ENCODE measurements at regions of chr11 and their contacts with region 1.

Region 1: DNA sequence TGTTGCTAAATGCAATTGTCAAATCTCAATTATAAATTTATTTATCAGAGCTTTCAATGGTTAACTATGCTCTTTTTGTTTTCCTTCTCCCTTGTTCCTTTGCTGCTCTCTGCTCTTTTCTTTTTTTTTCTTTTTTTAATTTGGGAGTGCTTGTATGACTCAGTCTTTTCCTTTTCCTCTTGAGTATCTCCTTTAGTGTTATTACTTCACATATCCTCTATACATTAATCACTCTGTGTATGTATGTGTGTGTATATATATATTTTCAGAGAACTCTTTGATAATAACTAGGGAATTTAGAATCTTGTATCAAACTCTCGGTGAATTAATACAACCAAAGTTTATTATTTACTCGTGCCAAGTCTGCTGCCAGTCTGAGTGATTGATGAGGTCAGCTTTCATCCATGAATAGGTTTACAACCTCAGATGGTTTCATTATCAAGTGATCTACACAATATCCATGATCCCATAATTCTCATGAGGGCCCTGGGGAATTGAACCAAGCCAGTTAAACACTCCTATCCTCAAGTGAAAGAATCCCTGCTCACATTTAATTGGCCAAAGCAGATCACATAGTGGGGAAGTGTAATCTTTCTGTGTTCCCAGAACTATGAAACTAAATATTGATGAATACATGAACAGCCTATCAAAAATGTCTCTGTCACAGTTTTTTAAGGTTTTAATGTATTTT is 743.4 kb upstream of the CNTN5 start:
- DNase-seq: no peak
- ATAC-seq: no peak
- H3K4me3 ChIP-seq: no peak overlapping the region
- H3K4me3 Mint-ChIP-seq: no peak overlapping the region
- H3K27ac ChIP-seq: no peak overlapping the region
- H3K27ac Mint-ChIP-seq: no peak overlapping the region
- H3K4me1 ChIP-seq: no peaks in the 10 kb centered on the region
- H3K4me1 Mint-ChIP-seq: peaks cover 0 to 2% (median 0%) of the 10 kb centered on the region in 7 donors
- H3K27me3 ChIP-seq: no peaks in the 10 kb centered on the region
- H3K27me3 Mint-ChIP-seq: no peaks in the 10 kb centered on the region

Region 2: DNA sequence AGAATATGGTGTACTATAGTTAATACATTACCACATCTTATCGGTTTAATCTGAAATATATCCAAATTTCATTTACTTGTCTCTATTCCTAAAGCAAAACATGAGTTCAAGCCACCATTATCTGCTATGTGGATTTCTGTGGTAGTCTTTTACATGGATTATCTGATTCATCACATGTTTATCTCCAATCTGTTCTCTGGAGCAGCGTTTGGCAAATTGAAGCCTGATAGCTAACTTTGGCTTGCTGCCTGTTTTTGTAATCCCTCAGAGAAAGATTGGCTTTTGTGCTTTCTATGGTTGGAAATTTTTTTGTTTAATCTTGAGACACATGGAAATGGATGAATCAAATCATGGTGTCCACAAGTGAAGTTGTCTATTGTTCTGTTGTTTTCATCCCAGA is 1613.3 kb before region 1 on chr11:
- CTCF ChIA-PET with region 1: no interaction called
- POLR2A ChIA-PET with region 1: no interaction called
- intact Hi-C with region 1: loop called in 1 of 2 experiments (anchors 5 kb)
- DNase-seq: no peak
- ATAC-seq: no peak
- H3K4me3 ChIP-seq: no peak overlapping the region
- H3K4me3 Mint-ChIP-seq: no peak overlapping the region
- H3K27ac ChIP-seq: no peak overlapping the region
- H3K27ac Mint-ChIP-seq: no peak overlapping the region
- H3K4me1 ChIP-seq: no peaks in the 10 kb centered on the region
- H3K4me1 Mint-ChIP-seq: no peaks in the 10 kb centered on the region
- H3K27me3 ChIP-seq: no peaks in the 10 kb centered on the region
- H3K27me3 Mint-ChIP-seq: no peaks in the 10 kb centered on the region

Region 3: DNA sequence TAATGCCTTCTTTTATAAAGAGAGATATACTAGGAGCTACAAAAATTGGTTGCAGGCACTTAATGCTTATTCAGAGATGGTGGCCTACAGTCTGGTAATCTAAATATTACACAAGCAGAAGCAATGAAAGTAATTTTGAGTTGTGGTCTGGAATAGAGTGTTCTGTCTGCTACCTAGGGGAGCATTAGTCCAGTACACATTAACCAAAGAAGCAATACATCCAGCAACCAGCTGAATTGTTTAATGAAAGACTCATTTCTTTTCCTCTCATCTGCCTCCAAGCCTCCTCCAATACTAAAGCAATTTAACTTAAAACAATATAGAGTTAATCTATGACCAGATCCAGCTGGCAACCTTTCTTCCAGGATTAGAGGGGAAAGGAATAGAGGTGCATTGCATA is 133.7 kb before region 1 on chr11:
- CTCF ChIA-PET with region 1: no interaction called
- POLR2A ChIA-PET with region 1: no interaction called
- intact Hi-C with region 1: no loop called
- DNase-seq: no peak
- ATAC-seq: no peak
- H3K4me3 ChIP-seq: no peak overlapping the region
- H3K4me3 Mint-ChIP-seq: no peak overlapping the region
- H3K27ac ChIP-seq: no peak overlapping the region
- H3K27ac Mint-ChIP-seq: no peak overlapping the region
- H3K4me1 ChIP-seq: no peaks in the 10 kb centered on the region
- H3K4me1 Mint-ChIP-seq: no peaks in the 10 kb centered on the region
- H3K27me3 ChIP-seq: no peaks in the 10 kb centered on the region
- H3K27me3 Mint-ChIP-seq: no peaks in the 10 kb centered on the region

Region 4: GRCh38 chr11:98243897-98244296 is 33.5 kb before region 1 on chr11:
- CTCF ChIA-PET with region 1: no interaction called
- POLR2A ChIA-PET with region 1: no interaction called
- intact Hi-C with region 1: no loop called
- DNase-seq: no peak
- ATAC-seq: no peak
- H3K4me3 ChIP-seq: no peak overlapping the region
- H3K4me3 Mint-ChIP-seq: no peak overlapping the region
- H3K27ac ChIP-seq: no peak overlapping the region
- H3K27ac Mint-ChIP-seq: no peak overlapping the region
- H3K4me1 ChIP-seq: no peaks in the 10 kb centered on the region
- H3K4me1 Mint-ChIP-seq: no peaks in the 10 kb centered on the region
- H3K27me3 ChIP-seq: no peaks in the 10 kb centered on the region
- H3K27me3 Mint-ChIP-seq: no peaks in the 10 kb centered on the region